ENCODE measurements at regions of chr2 and their contacts with region 1.

Region 1: DNA sequence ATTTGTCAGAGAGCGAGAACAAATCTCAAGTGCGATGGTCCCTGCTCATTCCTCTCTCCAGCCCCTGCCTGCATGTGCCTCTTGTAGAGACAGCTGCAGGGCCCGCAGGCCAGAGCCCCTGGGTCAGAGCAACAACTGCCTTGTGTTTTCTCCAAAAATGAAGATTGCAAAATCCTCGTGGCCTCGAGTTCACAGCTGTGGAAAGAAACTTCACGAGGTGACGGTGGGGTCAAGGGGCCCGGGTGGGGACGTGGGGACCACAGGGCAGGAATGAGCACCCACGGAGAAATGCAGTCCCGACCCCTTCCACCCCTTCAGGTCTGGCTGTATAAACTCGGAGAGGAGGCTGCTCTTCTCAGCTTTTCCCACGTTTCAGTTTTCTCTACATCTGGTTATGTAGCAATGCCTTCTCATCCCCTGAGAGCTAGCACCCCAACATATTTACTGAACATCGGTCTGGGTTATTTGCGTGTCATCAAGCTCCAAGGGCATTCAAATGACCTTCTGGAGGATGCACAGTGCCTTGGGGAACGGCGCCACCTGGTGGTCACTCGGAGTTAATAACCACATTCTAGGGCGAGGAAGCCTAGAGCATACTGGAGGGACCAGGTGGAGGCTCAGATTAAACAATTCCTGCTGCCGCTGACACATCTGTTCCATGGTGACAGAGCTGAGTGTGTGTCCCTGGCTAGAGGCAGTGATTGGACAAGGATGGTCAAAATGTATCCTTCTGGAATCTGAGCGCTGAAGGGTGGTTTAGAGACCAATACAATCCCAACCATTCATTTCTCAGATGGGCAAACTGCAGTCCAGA is 91.4 kb upstream of the CYRIA start:
- DNase-seq: peak; percentile 75
- H3K4me3 Mint-ChIP-seq: no peak overlapping the region
- H3K27ac Mint-ChIP-seq: no peak overlapping the region
- H3K4me1 Mint-ChIP-seq: no peaks in the 10 kb centered on the region
- H3K27me3 Mint-ChIP-seq: peaks cover 4% of the 10 kb centered on the region

Region 2: GRCh38 chr2:16553226-16553625 is 203.8 kb before region 1 on chr2:
- CTCF ChIA-PET with region 1: interaction called, 12 read pairs
- DNase-seq: peak; percentile 38
- H3K4me3 Mint-ChIP-seq: no peak overlapping the region
- H3K27ac Mint-ChIP-seq: no peak overlapping the region
- H3K4me1 Mint-ChIP-seq: no peaks in the 10 kb centered on the region
- H3K27me3 Mint-ChIP-seq: no peaks in the 10 kb centered on the region

Region 3: GRCh38 chr2:16617282-16618261 is 139.5 kb before region 1 on chr2:
- CTCF ChIA-PET with region 1: interaction called, 109 read pairs
- DNase-seq: no peak
- H3K4me3 Mint-ChIP-seq: no peak overlapping the region
- H3K27ac Mint-ChIP-seq: no peak overlapping the region
- H3K4me1 Mint-ChIP-seq: peaks cover 11% of the 10 kb centered on the region
- H3K27me3 Mint-ChIP-seq: peaks cover 18% of the 10 kb centered on the region

Region 4: DNA sequence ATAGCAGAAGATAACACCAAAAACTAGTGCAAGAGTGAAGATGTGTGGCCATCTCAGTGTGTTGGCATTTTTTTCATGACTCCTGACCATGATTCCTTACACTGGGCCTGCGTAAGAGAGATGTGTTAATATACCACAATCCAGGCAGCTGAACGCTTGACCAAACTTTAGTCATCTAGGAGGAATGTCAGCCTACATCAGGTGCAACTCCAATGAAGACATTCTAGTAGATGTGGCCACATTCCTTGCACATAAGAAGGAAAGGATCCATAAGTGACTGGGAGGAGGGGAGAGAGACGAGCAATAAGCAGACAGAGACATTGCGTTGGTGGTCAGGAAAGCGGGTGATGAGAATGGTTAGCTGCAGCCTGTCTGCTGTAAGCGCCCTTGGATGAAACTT is 134.0 kb before region 1 on chr2:
- CTCF ChIA-PET with region 1: interaction called, 41 read pairs
- DNase-seq: no peak
- H3K4me3 Mint-ChIP-seq: no peak overlapping the region
- H3K27ac Mint-ChIP-seq: peak overlapping the region; percentile 57
- H3K4me1 Mint-ChIP-seq: peaks cover 57% of the 10 kb centered on the region
- H3K27me3 Mint-ChIP-seq: peaks cover 5% of the 10 kb centered on the region

Region 5: DNA sequence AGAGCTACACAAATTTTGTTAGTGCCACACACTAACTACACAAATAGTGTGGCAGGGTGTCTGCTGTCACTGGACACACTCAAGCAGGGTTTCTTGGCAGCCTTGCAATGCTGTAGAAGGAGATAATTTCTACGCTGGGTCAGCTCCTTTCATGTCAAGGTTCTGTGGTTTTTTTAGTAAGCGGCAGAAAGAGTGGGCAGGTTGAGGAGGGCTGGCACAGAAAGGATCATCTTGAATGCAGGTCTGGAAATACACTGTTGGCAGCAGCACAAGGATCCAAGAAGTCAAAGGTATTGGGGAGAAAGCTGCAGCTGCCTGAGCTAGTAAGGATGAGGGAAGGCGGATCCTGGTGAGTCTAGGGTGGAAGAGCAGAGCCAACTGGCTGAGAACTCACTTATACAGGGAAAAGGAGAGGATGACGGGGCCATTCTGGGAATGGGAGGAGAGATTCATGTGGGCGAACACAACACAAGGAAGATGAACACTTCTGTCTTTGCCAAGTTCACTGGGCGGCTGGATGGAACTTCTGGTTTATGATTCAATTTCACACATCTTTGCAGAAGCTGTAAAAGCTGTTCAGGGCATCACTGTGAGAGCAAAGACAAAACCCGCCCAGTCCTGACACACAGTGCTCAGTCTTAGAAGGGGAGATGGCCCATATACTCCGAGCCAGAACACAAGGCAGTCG is 74.5 kb before region 1 on chr2:
- CTCF ChIA-PET with region 1: no interaction called
- DNase-seq: no peak
- H3K4me3 Mint-ChIP-seq: no peak overlapping the region
- H3K27ac Mint-ChIP-seq: no peak overlapping the region
- H3K4me1 Mint-ChIP-seq: no peaks in the 10 kb centered on the region
- H3K27me3 Mint-ChIP-seq: peaks cover 7% of the 10 kb centered on the region